ENCODE measurements at regions of chr22 and their contacts with region 1.

Region 1: DNA sequence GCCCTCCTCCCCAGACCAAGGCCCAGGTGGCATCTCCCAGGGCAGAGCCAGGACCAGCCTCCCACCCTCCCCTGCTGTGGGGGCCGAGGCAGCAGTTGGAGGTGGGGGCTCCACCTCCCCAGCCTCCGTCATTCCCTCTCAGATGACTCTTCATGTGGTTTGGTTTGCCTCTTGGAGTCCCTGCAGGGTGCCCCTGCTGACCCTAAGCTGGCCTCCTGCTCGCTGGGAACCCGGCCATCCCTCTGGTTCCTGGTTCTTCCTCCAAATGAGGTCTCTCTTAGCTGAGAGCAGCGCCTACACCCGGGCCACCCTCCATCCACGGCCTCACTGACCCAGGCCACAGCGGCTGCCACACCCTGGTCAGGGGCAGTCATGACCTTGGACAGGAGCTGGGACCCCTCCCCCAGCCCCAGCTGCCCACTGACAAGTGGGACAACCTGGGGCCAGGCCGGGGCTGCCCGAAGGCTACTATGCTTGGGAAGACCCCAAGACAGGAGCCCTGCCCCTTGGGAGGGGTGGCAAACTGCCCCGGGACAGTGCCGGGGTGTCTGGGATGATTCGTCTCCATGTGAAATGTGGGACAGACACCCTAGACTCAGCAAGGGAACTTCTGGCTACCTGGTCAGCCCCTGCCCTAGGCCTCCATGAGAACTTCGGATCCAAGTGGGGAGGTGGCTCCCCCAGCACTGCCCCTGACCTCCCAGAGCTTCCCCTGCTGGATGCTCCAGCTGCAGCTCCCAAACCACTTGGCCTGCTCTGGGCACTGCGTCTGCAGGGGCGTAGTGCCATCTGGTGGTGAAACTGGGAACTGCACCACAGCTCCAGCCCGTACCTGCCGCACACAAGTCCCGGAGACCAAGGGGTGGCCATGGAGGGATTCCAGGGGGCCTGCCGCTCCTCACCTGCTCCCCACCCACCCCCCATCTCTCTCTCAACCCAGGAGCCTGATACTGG is 194.5 kb downstream of the IGLL1 start:
- DNase-seq: peak; percentile 89
- H3K4me3 Mint-ChIP-seq: no peak overlapping the region
- H3K27ac Mint-ChIP-seq: no peak overlapping the region
- H3K4me1 Mint-ChIP-seq: no peaks in the 10 kb centered on the region
- H3K27me3 Mint-ChIP-seq: peaks cover 2% of the 10 kb centered on the region

Region 2: DNA sequence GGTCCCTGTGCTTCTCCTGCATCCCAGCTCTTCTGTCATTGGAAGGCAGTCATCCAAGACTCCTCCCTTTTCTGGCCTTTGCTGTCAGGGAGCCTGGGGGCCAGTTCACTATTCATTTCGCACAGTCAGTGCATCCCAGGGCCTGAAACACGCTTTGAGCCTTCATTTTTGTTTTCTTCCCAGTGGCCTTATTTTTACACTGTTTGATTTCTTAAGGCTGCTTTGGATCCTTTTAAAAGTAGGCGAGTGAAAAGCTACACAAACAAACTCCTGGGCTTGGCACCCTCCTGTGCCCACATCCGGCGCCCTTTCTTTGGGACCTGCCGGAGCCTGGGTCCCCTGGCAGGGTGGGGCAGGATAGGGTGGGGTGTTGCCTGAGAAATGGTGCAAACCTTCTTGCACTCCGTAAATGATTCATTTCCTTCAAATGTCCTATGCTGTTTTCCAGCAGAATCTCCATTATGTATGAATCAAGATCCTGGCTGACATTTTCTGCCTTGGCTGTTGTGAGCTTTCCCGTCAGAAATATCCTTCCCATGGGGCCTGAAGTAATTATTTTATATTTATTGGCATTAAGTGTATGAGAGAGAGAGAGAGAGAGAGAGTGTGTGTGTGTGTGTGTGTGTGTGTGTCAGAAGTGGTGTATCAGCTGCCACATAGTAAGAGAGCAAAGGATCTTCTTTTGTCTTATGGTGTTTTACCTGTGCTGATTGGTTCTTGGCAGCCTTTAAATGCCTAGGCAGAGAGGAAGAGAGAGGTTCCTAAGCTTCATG is 159.7 kb before region 1 on chr22:
- CTCF ChIA-PET with region 1: no interaction called
- intact Hi-C with region 1: no loop called
- DNase-seq: peak; percentile 73
- H3K4me3 Mint-ChIP-seq: peak overlapping the region; percentile 11
- H3K27ac Mint-ChIP-seq: peak overlapping the region; percentile 78
- H3K4me1 Mint-ChIP-seq: peaks cover 89% of the 10 kb centered on the region
- H3K27me3 Mint-ChIP-seq: no peaks in the 10 kb centered on the region

Region 3: GRCh38 chr22:23315341-23315917 is 70.1 kb before region 1 on chr22:
- CTCF ChIA-PET with region 1: interaction called, 12 read pairs
- intact Hi-C with region 1: loop called (anchors 1 kb)
- DNase-seq: peak; percentile 70
- H3K4me3 Mint-ChIP-seq: no peak overlapping the region
- H3K27ac Mint-ChIP-seq: peak overlapping the region; percentile 30
- H3K4me1 Mint-ChIP-seq: peaks cover 7% of the 10 kb centered on the region
- H3K27me3 Mint-ChIP-seq: no peaks in the 10 kb centered on the region

Region 4: DNA sequence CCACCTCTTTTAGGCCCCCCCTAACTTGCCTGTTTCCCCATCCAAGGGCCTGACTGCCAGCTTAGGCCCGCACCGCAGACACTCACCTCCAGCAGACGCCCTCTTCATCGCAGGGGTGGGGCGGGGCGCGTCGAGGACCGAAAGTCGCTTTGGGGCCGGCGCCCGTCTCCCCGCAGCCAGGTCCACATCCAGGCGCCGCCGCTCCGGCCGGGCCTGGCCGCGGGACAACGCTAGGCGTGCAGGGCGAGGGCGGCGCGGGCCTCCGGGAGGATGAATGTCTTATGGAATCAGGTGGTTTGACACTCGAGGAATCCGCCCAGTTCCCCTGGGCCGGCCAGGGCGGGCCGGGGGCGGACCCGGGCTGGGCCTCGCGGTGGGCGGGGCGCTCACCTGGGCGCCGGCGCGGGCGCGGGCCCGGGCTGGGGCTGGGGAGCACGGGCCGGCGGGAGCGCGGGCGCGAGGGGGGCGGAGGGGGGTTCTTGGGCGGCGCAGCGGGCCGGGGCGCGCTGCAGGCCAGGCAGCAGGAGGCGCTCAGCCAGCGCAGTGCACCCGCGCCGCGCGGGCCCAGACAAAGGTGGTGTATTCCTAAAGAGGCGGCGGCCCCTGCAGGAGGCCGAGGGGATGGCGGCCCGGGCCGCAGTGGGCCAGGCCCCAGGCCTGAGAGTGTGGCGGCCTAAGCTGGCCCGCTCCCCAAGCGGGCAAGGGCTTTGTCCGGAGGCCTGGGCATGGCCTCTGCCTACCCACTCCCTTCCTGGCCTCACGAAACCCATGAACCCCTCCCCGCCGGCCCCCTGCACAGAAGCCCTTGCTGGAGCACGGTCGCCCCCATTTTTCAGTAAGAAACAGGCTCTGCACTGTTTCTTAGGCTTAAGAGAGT is 16.9 kb after region 1 on chr22:
- CTCF ChIA-PET with region 1: interaction called, 11 read pairs
- intact Hi-C with region 1: no loop called
- DNase-seq: peak; percentile 69
- H3K4me3 Mint-ChIP-seq: no peak overlapping the region
- H3K27ac Mint-ChIP-seq: no peak overlapping the region
- H3K4me1 Mint-ChIP-seq: no peaks in the 10 kb centered on the region
- H3K27me3 Mint-ChIP-seq: no peaks in the 10 kb centered on the region

Measured in activated naive CD4-positive, alpha-beta T cell treated with anti-CD3 and anti-CD28 coated beads for 36 hours (primary cell).